AG04449 (cell line): ENCODE measurements at regions of chr3 and their contacts with region 1.

Region 1: DNA sequence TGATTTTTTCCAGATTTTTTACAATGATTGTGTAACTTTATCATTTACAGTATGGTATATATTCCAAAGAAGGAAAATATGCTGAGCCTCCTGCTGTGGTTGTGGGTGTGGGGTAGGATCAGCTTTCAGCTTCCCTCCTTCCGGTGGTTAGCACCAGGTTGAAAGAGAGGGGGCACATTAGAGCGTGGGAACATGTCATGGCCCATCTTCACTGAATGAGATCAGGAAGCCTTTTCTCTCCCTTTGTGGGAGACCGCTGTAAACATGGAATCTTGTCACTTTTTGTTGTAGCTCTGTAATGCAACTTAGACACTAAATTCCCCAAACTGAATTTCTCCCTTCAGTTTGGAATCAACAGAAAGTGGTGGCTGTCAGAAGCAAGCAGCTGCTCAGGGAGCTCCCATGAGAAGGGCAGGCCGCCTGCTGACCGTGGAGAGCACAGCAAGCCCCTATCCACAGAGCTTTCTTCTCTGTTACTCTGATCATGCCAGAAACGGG is 86.7 kb upstream of the LIMD1 start:
- DNase-seq: no peak
- H3K4me3 ChIP-seq: no peak overlapping the region
- CTCF ChIP-seq: peak; percentile 79

Region 2: DNA sequence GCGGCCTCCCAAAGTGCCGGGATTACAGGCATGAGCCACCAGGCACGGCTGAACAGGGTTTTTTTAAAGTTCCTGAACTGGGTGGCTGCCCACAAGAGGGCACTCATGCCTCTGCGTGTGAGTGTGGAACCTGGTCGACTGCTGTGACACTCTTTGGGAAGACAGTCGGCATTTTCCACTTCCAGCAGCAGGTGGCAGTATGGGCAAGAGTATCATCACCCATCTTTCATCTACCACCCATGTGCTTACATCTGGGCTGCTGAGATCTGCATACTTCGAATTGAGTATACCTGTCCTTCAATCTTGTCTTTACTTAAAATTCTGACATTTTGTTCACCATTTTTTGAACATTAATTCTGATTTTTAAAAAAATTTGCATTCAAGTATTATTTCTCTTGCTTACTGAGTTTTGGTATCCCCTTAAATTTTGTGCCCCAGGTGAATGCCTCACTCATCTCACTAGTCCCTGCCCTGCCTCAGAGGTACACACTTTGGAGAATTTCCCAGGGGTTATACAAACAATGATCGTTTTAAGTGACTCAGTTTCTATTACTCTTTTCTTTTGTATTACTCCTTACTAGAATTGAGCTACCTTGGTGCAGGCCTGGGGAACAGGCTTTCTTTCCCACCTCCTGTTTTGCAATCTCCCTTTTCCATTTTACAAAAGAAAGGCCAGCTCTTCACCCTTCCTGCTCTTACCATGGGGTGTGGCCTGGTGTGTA is 470.0 kb before region 1 on chr3:
- CTCF ChIA-PET with region 1: interaction called, 380 read pairs
- POLR2A ChIA-PET with region 1: no interaction called
- DNase-seq: peak; percentile 63
- H3K4me3 ChIP-seq: no peak overlapping the region
- CTCF ChIP-seq: peak; percentile 88

Region 3: GRCh38 chr3:45224824-45225464 is 282.9 kb before region 1 on chr3:
- CTCF ChIA-PET with region 1: interaction called, 118 read pairs
- POLR2A ChIA-PET with region 1: no interaction called
- DNase-seq: no peak
- H3K4me3 ChIP-seq: peak overlapping the region; percentile 75
- CTCF ChIP-seq: peak; percentile 86

Region 4: GRCh38 chr3:45677033-45677433 is 169.2 kb after region 1 on chr3:
- CTCF ChIA-PET with region 1: interaction called, 37 read pairs
- POLR2A ChIA-PET with region 1: no interaction called
- DNase-seq: peak; percentile 44
- H3K4me3 ChIP-seq: no peak overlapping the region
- CTCF ChIP-seq: no peak

Region 5: DNA sequence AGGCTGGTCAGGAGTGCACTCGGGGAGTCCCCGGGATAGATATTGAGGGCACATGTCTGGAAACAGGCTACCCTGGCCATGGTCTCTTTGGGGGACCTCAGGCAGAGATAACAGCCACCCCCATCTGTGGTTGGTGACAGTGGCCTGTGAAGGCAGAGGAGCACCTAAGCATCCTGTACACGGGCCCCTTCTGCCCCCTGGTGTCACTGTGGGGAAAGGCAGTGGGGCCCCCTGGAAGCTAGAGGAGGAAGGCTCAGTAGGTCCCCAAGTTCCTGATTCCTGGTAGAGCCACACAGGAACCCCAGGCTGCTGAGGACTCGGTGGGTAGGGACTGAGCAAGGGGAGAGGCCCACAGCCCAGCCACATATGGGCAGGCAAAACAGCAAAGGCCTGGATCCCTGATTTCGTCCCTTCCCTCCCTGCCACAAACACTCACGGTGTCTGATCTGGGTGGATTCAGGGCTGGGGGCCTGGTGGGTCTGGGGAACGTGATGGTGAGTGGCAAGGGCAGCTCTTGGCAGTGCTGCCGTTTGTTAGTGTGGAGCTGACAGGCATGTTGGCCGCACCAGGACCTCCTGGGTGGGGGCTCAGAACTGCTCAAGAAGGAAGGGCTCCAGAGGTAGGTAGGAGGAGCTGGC is 421.3 kb after region 1 on chr3:
- CTCF ChIA-PET with region 1: interaction called, 54 read pairs
- POLR2A ChIA-PET with region 1: no interaction called
- DNase-seq: no peak
- H3K4me3 ChIP-seq: no peak overlapping the region
- CTCF ChIP-seq: peak; percentile 91

Region 6: GRCh38 chr3:45958321-45958791 is 450.5 kb after region 1 on chr3:
- CTCF ChIA-PET with region 1: no interaction called
- POLR2A ChIA-PET with region 1: no interaction called
- DNase-seq: no peak
- H3K4me3 ChIP-seq: no peak overlapping the region
- CTCF ChIP-seq: no peak